ENCODE measurements at regions of chr9 and their contacts with region 1.

Region 1: GRCh38 chr9:127396808-127397497 is at the start of gene SLC2A8:
- DNase-seq: peak; percentile 99
- ATAC-seq: peak; percentile 95
- H3K4me3 ChIP-seq: peak within 1 kb of the TSS; percentile 89
- H3K27ac ChIP-seq: peak within 1 kb of the TSS; percentile 60
- H3K4me1 ChIP-seq: peaks cover 9% of the 10 kb centered on the region
- H3K27me3 ChIP-seq: no peaks in the 10 kb centered on the region
- CTCF ChIP-seq: peak in 1 of 3 experiments; percentile 15; a peak in 1 of 6 replicates
- EP300 ChIP-seq: no peak
- POLR2A ChIP-seq: peak; percentile 83
- RAD21 ChIP-seq: no peak
- polyA plus RNA-seq, gene SLC2A8: 0.31 to 1.4 TPM

Region 2: DNA sequence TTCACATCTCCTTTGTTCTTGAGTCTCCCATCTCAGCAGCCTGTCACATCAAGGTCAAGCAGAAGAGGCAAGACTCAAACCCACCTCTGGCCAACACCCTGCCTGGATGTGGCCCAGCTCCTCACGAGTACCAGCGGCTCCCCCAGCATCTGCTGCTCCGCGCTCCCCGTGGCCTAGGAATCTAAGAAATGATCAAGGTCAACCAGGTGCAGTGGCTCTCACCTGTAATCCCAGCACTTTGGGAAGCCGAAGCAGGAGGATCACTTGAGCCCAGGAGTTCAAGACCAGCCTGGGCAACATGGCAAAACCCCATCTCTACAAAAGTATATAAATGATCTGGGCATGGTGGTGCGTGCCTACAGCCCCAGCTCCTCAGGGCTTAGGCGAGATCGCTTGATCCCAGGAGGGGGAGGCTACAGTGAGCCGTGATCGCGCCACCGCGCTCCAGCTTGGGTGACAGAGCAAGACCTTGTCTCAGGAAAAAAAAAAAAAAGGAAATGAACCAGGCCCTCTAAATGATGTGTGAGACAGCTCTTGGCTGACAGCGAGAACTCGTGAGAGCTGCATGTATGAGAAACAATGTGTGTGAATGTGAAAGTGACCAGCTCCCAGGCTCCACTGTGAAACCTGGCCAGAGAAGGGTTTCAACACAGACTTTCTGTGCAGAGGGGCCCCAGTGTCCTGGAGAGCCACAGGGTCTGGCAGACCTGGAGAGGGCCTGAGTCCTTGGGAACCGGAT is 212.9 kb before region 1 on chr9:
- CTCF ChIA-PET with region 1: no interaction called
- POLR2A ChIA-PET with region 1: no interaction called
- RAD21 ChIA-PET with region 1: no interaction called
- SMC1A ChIA-PET with region 1: no interaction called
- in situ Hi-C with region 1: no loop called
- intact Hi-C with region 1: no loop called
- DNase-seq: peak; percentile 95
- ATAC-seq: peak; percentile 90
- H3K4me3 ChIP-seq: no peak overlapping the region
- H3K27ac ChIP-seq: peak overlapping the region; percentile 88
- H3K4me1 ChIP-seq: peaks cover 35% of the 10 kb centered on the region
- H3K27me3 ChIP-seq: no peaks in the 10 kb centered on the region
- CTCF ChIP-seq: no peak
- EP300 ChIP-seq: peak; percentile 69 to 79
- POLR2A ChIP-seq: no peak
- RAD21 ChIP-seq: peak; percentile 25; the same call in 1 of the 2 replicates

Region 3: GRCh38 chr9:127214421-127215267 is 182.3 kb before region 1 on chr9:
- CTCF ChIA-PET with region 1: interaction called, 12 read pairs
- POLR2A ChIA-PET with region 1: no interaction called
- RAD21 ChIA-PET with region 1: interaction called, 13 read pairs
- SMC1A ChIA-PET with region 1: interaction called, 16 read pairs
- in situ Hi-C with region 1: loop called (anchors 5 kb)
- intact Hi-C with region 1: no loop called
- DNase-seq: no peak
- ATAC-seq: peak; percentile 96
- H3K4me3 ChIP-seq: no peak overlapping the region
- H3K27ac ChIP-seq: no peak overlapping the region
- H3K4me1 ChIP-seq: no peaks in the 10 kb centered on the region
- H3K27me3 ChIP-seq: no peaks in the 10 kb centered on the region
- CTCF ChIP-seq: peak; percentile 85 to 91 (median 86); a peak in 5 of 6 replicates
- EP300 ChIP-seq: no peak
- POLR2A ChIP-seq: no peak
- RAD21 ChIP-seq: peak; percentile 88

Region 4: GRCh38 chr9:127224178-127224882 is 172.6 kb before region 1 on chr9:
- CTCF ChIA-PET with region 1: interaction called, 9 read pairs
- POLR2A ChIA-PET with region 1: no interaction called
- RAD21 ChIA-PET with region 1: interaction called, 17 read pairs
- SMC1A ChIA-PET with region 1: interaction called, 4 read pairs
- in situ Hi-C with region 1: loop called (anchors 5 kb)
- intact Hi-C with region 1: loop called (anchors 2 kb)
- DNase-seq: peak; percentile 56
- ATAC-seq: peak; percentile 85
- H3K4me3 ChIP-seq: peak overlapping the region; percentile 67; the same call in 1 of the 2 replicates
- H3K27ac ChIP-seq: peak overlapping the region; percentile 43; the same call in 1 of the 2 replicates
- H3K4me1 ChIP-seq: peaks cover 27% of the 10 kb centered on the region
- H3K27me3 ChIP-seq: peaks cover 0 to 2% of the 10 kb centered on the region in 2 experiments; a peak in 2 of 4 replicates
- CTCF ChIP-seq: 0 out of 6 replicates have a peak, but pooled peaks of 1 of the 3 experiments have one; percentile 3
- EP300 ChIP-seq: no peak
- POLR2A ChIP-seq: peak; percentile 76
- RAD21 ChIP-seq: no peak

Region 5: GRCh38 chr9:127258606-127259471 is 138.1 kb before region 1 on chr9:
- CTCF ChIA-PET with region 1: no interaction called
- POLR2A ChIA-PET with region 1: no interaction called
- RAD21 ChIA-PET with region 1: no interaction called
- SMC1A ChIA-PET with region 1: no interaction called
- in situ Hi-C with region 1: no loop called
- intact Hi-C with region 1: no loop called
- DNase-seq: no peak
- ATAC-seq: no peak
- H3K4me3 ChIP-seq: no peak overlapping the region
- H3K27ac ChIP-seq: no peak overlapping the region
- H3K4me1 ChIP-seq: no peaks in the 10 kb centered on the region
- H3K27me3 ChIP-seq: no peaks in the 10 kb centered on the region
- CTCF ChIP-seq: no peak
- EP300 ChIP-seq: no peak
- POLR2A ChIP-seq: no peak
- RAD21 ChIP-seq: no peak

Region 6: DNA sequence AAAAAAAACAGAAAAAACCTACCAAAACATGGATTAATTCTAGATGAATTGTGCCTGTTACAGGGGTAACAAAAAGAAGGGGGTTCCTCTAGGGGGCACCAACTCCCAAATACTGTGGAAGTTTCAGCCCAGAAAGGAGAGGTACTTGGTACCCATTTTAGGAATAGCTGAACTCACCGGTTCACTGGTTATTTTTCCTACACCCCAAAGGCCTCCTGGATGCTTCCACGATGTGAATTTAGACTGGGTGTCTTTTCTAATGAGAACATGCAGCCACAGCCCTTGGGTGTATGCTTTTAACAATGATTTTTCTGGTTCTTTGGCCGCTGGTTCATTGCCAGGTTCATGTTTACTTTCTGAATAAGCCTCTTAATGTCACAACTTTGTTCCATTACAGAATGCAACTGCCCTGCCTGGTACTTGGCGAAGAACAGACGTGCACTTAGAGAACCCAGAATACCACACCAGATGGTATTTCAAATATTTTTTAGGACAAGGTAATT is 85.7 kb before region 1 on chr9:
- CTCF ChIA-PET with region 1: interaction called, 25 read pairs
- POLR2A ChIA-PET with region 1: interaction called, 6 read pairs
- RAD21 ChIA-PET with region 1: interaction called, 6 read pairs
- SMC1A ChIA-PET with region 1: interaction called, 12 read pairs
- in situ Hi-C with region 1: no loop called
- intact Hi-C with region 1: loop called (anchors 5 kb)
- DNase-seq: no peak
- ATAC-seq: peak; percentile 58
- H3K4me3 ChIP-seq: no peak overlapping the region
- H3K27ac ChIP-seq: no peak overlapping the region
- H3K4me1 ChIP-seq: no peaks in the 10 kb centered on the region
- H3K27me3 ChIP-seq: no peaks in the 10 kb centered on the region
- CTCF ChIP-seq: peak; percentile 33 to 45 (median 43)
- EP300 ChIP-seq: no peak
- POLR2A ChIP-seq: no peak
- RAD21 ChIP-seq: peak; percentile 49

Region 7: DNA sequence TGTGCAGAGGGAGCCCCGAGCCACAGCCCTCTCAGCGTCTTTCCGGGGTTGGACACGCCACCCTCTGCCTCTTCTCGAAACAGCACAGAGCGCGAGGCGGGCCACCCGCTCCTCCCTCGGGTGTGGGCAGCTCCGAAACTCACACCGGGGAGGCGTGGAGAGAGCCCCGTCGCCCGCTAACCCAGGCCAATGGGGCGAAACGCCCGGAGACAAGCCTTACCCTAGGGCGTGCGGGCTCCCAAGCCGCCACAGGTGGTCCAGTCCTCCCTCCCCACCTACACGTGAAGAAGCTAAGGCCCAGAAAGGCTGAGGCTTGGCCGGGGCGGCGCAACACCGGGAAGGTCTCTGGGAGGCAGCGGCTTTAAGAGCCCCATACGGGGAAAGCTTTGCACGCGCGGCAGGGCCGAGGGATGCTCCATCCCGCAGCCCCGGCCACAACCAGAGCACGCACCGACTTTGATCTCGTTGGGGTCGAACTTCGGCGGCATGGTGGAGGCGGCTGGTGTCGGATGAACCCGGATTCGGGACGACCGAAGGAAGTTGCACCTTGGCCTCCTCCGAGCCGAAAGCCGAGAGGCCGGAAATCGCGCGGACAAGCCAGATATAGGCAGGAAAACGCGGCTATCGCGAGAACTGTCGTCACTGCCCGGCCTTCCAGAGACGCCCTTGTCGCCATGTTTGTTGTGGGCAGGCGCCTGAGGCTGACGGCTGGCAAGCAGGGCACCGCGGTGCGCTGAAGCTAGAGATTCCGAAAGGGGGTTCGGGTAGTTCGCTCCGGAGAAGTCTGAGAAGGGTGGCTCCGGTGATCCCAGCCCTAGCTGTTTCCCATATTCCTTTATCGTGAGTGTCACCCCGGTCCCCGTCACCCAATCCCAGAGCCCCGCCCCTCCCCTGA is 54.1 kb after region 1 on chr9 and contains the starts of genes LRSAM1 and RPL12:
- CTCF ChIA-PET with region 1: interaction called, 4 read pairs
- POLR2A ChIA-PET with region 1: interaction called, 18 read pairs
- RAD21 ChIA-PET with region 1: interaction called, 9 read pairs
- SMC1A ChIA-PET with region 1: interaction called, 4 read pairs
- in situ Hi-C with region 1: no loop called
- intact Hi-C with region 1: no loop called
- DNase-seq: peak; percentile 79
- ATAC-seq: peak; percentile 74
- H3K4me3 ChIP-seq: peak within 1 kb of the TSS; percentile 93
- H3K27ac ChIP-seq: peak within 1 kb of the TSS; percentile 94
- H3K4me1 ChIP-seq: peaks cover 6% of the 10 kb centered on the region; the same call in 1 of the 2 replicates
- H3K27me3 ChIP-seq: no peaks in the 10 kb centered on the region
- CTCF ChIP-seq: peak in 1 of 3 experiments; percentile 8; a peak in 1 of 6 replicates
- EP300 ChIP-seq: no peak
- POLR2A ChIP-seq: peak; percentile 99
- RAD21 ChIP-seq: 0 out of 2 replicates have a peak, but pooled peaks have one; percentile 0
- polyA plus RNA-seq, gene LRSAM1: 0.14 to 0.53 TPM
- polyA plus RNA-seq, gene RPL12: 3,077 to 3,412 TPM